Activated CD8-positive, alpha-beta T cell treated with anti-CD3 and anti-CD28 coated beads for 36 hours (primary cell): ENCODE measurements at regions of chr19 and their contacts with region 1.

Region 1: GRCh38 chr19:53537480-53538383 is at the start of gene ZNF331:
- DNase-seq: peak; percentile 91
- ATAC-seq: peak; percentile 78
- H3K4me3 Mint-ChIP-seq: peak within 1 kb of the TSS; percentile 94
- H3K27ac Mint-ChIP-seq: peak within 1 kb of the TSS; percentile 98
- H3K4me1 Mint-ChIP-seq: peaks cover 20% of the 10 kb centered on the region
- H3K27me3 Mint-ChIP-seq: no peaks in the 10 kb centered on the region
- CTCF ChIP-seq: no peak
- total RNA-seq, gene ZNF331: 34.8 to 36.4 TPM

Region 2: DNA sequence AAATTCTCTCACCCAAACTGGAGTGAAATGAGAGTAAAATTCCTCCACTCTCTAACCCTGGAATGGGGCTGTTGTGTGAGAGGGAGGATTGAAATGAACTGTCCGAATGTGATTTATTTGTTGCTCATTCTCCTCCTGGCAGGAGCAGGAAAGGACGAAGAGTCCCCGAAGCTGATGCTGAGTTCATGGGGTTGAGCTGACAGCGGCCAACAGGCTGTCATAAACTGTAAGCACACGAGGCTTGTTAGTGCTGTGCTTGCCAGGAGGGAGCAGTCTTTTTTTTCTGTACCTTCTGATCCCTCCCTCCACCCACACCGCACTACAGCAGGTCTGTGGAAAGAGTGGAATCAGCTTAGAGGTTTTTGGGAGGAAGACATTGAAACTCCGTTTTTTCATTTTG is 32.8 kb before region 1 on chr19:
- CTCF ChIA-PET with region 1: no interaction called
- POLR2A ChIA-PET with region 1: no interaction called
- intact Hi-C with region 1: no loop called
- DNase-seq: no peak
- ATAC-seq: no peak
- H3K4me3 Mint-ChIP-seq: no peak overlapping the region
- H3K27ac Mint-ChIP-seq: no peak overlapping the region
- H3K4me1 Mint-ChIP-seq: no peaks in the 10 kb centered on the region
- H3K27me3 Mint-ChIP-seq: peaks cover 20% of the 10 kb centered on the region
- CTCF ChIP-seq: no peak

Region 3: GRCh38 chr19:53520550-53521372 is 17.0 kb before region 1 on chr19:
- CTCF ChIA-PET with region 1: interaction called, 3 read pairs
- POLR2A ChIA-PET with region 1: interaction called, 13 read pairs
- intact Hi-C with region 1: no loop called
- DNase-seq: peak; percentile 94
- ATAC-seq: peak; percentile 97
- H3K4me3 Mint-ChIP-seq: peak overlapping the region; percentile 100
- H3K27ac Mint-ChIP-seq: peak overlapping the region; percentile 94
- H3K4me1 Mint-ChIP-seq: peaks cover 20% of the 10 kb centered on the region
- H3K27me3 Mint-ChIP-seq: no peaks in the 10 kb centered on the region
- CTCF ChIP-seq: no peak